ENCODE measurements at regions of chr18 and their contacts with region 1.

Region 1: GRCh38 chr18:62131301-62131909 is 55.5 kb downstream of the PIGN start:
- DNase-seq: peak; percentile 20 to 41
- H3K4me3 ChIP-seq: no peak overlapping the region
- H3K27ac ChIP-seq: no peak overlapping the region
- H3K4me1 ChIP-seq: no peaks in the 10 kb centered on the region
- H3K27me3 ChIP-seq: no peaks in the 10 kb centered on the region
- CTCF ChIP-seq: peak; percentile 92

Region 2: DNA sequence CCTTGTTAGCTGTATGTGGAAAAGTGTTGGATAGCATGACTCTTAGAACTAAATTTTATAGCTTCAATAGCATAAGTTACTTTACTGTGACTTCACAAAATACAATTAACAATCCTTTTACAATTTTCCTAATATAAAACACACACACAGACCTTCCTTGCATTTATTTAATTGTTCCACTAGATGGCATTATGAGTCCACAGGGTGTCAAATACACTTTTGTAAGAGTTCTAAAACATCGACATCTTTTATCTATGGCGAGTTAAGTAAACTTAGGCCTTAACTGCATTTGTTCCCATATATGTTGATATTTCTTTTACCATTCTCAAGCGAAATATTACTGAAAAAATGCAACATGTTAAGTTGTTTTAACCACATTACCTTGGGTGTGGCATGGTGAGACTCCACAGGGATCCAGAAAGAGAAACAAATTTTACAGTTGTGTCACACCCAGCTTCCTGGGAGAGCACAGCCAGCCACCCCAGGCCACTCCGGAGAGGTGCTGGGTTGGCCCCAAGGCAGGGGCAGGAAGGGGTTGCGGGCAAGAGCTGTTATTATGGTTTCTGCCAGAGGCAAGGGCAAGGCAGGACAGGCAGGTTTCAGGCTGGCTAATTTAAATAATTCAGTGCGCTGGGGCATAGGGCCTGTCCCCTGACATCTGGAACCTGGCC is 1446.4 kb before region 1 on chr18:
- CTCF ChIA-PET with region 1: no interaction called
- POLR2A ChIA-PET with region 1: no interaction called
- intact Hi-C with region 1: loop called (anchors 1 kb)
- DNase-seq: no peak
- H3K4me3 ChIP-seq: no peak overlapping the region
- H3K27ac ChIP-seq: no peak overlapping the region
- H3K4me1 ChIP-seq: no peaks in the 10 kb centered on the region
- H3K27me3 ChIP-seq: no peaks in the 10 kb centered on the region
- CTCF ChIP-seq: peak; percentile 77

Region 3: GRCh38 chr18:61322265-61322873 is 809.0 kb before region 1 on chr18:
- CTCF ChIA-PET with region 1: no interaction called
- POLR2A ChIA-PET with region 1: no interaction called
- intact Hi-C with region 1: loop called (anchors 5 kb)
- DNase-seq: peak in 1 of 2 experiments; percentile 21
- H3K4me3 ChIP-seq: no peak overlapping the region
- H3K27ac ChIP-seq: no peak overlapping the region
- H3K4me1 ChIP-seq: no peaks in the 10 kb centered on the region
- H3K27me3 ChIP-seq: no peaks in the 10 kb centered on the region
- CTCF ChIP-seq: peak; percentile 76

Region 4: DNA sequence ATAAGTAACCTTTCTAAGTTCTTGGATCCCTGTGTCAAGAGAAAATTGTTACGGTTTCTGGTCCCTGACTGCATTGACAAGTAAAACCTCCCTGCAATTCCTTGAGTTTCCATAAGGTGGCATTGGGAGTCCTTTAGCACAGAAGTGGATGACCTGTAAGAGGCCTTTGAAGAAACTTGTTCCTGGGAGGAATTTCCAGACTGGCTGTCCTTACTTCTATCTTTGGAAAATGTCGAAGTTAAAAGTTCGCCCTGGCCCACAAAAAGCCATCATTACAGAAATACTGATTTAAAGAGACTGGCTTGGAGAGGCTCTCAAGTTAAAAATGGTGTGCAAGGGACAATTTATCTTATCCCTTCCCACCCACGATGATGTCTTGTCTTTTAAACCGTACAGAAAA is 579.8 kb before region 1 on chr18:
- CTCF ChIA-PET with region 1: interaction called, 3 read pairs
- POLR2A ChIA-PET with region 1: no interaction called
- intact Hi-C with region 1: loop called (anchors 2 kb)
- DNase-seq: peak; percentile 15 to 52
- H3K4me3 ChIP-seq: no peak overlapping the region
- H3K27ac ChIP-seq: no peak overlapping the region
- H3K4me1 ChIP-seq: no peaks in the 10 kb centered on the region
- H3K27me3 ChIP-seq: no peaks in the 10 kb centered on the region
- CTCF ChIP-seq: peak; percentile 77

Region 5: DNA sequence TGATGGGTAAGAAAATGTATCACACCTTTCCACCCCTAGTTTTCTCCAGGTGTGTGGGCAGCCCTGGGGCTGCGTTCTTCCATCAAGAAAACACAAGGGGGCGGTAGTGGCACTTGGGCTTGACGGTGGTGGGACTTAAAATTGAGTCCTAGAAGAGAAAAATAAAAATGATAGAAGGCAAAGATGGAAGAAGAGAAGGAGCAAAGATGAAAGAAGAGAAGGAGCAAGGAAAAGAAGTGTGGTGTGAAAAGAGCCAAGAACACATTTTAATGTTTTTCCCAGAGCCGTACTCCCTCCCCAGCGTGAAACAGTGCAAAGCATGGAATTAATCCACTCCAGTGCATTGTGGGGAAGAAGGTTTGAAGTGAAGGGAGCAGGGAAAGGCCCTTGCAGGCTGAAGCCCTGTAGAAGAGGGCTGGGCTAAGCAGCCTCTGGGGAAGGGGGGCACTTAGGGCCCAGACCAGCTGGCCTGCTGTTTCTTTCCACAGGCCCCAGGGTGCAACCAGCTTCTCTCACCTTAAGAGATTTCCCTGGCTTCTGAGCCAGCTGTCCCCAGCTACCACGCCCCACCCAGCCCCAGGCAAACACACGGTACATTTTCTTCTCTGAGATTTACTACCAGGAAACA is 495.4 kb before region 1 on chr18:
- CTCF ChIA-PET with region 1: no interaction called
- POLR2A ChIA-PET with region 1: no interaction called
- intact Hi-C with region 1: loop called (anchors 5 kb)
- DNase-seq: peak in 1 of 2 experiments; percentile 23
- H3K4me3 ChIP-seq: no peak overlapping the region
- H3K27ac ChIP-seq: no peak overlapping the region
- H3K4me1 ChIP-seq: no peaks in the 10 kb centered on the region
- H3K27me3 ChIP-seq: no peaks in the 10 kb centered on the region
- CTCF ChIP-seq: peak; percentile 72

Region 6: DNA sequence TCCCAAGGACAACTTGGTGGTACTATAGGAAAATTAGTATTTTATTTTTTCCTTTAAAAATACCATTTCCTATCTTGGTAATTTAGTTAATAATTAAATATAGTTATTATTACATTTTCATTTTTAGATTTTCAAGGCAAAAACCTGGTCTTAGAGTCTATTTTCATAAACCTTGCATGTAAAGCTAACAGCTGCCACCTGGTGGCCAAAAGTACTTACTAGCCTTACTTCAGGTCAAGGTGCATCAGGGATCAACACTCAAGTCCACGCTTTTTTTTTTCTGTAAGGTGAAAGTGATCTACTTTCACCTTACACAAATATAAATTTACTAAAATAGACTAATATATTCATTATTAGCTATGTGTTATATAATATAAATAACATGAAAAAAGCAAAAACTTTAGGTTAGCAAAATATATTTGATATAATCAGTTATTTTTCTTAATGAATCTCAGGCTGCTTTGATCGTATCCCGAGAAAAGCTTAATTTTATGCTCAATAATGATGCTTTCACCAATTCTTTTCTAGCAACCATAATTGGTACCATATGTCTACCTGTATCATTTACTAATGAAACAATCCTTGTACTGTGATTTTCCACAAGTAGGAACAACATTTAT is 118.2 kb after region 1 on chr18:
- CTCF ChIA-PET with region 1: no interaction called
- POLR2A ChIA-PET with region 1: no interaction called
- intact Hi-C with region 1: no loop called
- DNase-seq: peak; percentile 40 to 63
- H3K4me3 ChIP-seq: no peak overlapping the region
- H3K27ac ChIP-seq: no peak overlapping the region
- H3K4me1 ChIP-seq: no peaks in the 10 kb centered on the region
- H3K27me3 ChIP-seq: no peaks in the 10 kb centered on the region
- CTCF ChIP-seq: peak; percentile 79